ENCODE measurements at regions of chr5 and their contacts with region 1.

Region 1: DNA sequence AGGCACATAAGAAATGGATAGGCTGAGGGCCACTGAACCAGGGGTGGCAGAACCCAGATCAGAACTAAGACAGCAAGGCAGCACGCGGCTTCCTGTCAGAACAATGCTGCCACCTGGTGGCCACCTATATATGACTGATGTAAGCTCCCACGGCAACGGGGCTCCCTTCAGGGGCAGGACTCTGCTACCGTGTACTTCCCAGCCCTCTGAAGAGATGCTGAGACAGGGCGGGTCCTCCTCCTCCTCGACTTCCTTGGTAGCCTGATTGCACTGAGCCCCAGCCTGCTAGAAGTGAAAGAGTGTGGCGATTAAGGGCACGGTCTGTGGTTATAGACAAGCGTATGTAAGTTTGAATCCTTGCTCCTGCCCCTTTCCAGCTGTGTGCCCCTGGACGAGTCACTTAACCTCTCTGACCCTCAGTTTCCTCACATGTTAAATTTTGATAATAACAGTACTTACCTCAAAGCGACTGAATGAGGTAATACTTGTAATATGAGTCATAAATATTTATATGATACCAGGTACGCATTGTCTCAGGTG is 13.3 kb downstream of the RPS14 start:
- DNase-seq: peak; percentile 91
- H3K4me3 ChIP-seq: no peak overlapping the region
- H3K27ac ChIP-seq: no peak overlapping the region
- H3K4me1 ChIP-seq: no peaks in the 10 kb centered on the region
- H3K27me3 ChIP-seq: no peaks in the 10 kb centered on the region
- CTCF ChIP-seq: peak; percentile 86

Region 2: DNA sequence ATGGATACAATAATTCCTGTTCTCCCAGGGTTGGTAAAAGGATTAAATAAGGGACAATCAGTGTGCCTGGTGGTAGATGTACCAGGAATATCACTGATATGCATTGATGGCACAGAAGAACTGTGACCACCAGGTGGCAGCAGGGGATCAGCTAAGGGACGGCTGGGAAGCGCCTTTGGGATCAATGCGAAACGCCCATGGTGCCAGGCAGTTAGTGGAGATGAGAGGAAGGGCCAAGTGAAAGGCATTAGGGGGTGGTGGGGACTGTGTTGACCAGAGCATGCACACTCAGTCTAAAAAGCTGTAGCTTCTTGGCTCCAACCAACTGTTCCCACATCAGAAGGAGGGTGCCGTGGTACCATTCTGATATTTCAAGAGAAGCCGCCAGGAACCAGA is 799.4 kb before region 1 on chr5:
- CTCF ChIA-PET with region 1: no interaction called
- POLR2A ChIA-PET with region 1: no interaction called
- intact Hi-C with region 1: loop called (anchors 5 kb)
- DNase-seq: peak; percentile 89
- H3K4me3 ChIP-seq: no peak overlapping the region
- H3K27ac ChIP-seq: no peak overlapping the region
- H3K4me1 ChIP-seq: no peaks in the 10 kb centered on the region
- H3K27me3 ChIP-seq: no peaks in the 10 kb centered on the region
- CTCF ChIP-seq: peak; percentile 97

Region 3: DNA sequence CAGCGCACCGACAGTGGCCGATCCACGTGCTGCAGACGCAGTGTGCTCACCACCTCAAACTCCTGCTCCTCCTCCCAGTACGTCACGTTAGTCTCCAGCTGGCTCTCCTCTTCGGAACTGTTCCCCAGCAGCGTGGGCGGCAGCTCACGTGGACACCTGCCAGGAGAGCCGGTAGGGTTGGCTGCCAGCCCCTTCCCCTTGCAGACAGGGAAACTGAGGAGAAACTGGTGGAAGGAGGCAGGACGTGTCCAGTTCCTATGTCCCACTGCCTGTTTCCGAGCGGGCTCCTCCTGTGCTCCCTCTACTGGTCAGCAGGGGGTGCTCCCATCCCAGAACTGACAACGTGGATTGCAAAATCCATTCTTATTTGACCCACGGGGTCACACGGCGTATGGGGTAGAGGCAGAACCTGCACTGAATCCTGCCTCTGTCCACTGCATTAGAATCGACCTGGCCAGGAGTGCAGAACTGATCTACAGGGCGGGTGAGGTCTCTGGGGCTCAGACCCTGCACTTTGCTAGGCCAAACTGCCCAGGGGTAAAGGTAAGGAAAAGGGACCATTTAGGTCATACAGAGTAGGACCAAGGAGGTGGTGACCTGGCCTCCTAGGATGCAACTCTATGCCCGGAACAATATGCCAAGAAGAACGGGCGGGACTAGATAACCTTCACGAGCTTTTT is 306.3 kb before region 1 on chr5:
- CTCF ChIA-PET with region 1: no interaction called
- POLR2A ChIA-PET with region 1: no interaction called
- intact Hi-C with region 1: loop called (anchors 2 kb)
- DNase-seq: peak; percentile 67
- H3K4me3 ChIP-seq: no peak overlapping the region
- H3K27ac ChIP-seq: no peak overlapping the region
- H3K4me1 ChIP-seq: no peaks in the 10 kb centered on the region
- H3K27me3 ChIP-seq: no peaks in the 10 kb centered on the region
- CTCF ChIP-seq: peak; percentile 94

Region 4: DNA sequence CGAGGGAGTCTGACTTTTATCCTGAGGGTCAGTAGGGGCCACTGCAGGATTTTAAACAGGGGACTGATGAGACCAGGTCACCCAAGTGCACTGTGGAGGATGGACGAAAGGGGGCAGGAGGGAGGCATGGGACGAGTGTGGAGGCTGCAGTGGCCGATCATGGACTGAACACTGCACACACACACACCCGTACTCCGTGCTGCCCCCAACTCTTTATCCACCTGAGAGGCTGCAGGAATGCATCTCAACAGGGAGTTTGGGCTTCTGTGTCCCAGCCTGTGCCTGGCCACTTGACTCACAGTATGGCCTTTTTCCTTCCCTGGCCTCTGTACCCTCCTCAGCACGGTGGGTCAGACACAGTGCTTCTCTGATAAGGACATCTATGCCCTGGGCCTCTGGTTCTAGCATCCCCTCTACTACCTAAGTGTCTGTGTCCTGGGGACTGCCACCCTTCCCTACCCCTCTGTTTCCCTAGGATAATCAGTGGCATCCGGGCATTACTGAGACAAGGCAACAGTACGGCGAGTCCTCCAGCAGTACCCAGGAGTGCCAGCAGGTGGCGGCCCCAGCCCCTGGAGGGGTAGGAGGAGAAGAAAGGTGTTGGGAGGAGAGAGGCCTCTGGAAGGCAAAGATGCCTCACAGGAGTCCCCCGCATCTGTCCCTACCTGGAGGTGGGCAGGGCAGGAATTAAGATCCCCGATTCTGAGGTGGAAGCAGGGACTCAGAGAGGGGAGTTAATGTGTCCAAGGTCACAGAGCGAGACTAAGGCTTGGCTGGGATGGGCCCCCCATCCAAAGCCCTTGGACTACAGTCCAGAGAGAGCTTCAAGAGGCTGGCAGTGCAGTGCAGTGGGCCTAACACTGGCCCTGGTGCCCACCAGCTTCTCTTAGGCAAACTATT is 274.7 kb before region 1 on chr5:
- CTCF ChIA-PET with region 1: no interaction called
- POLR2A ChIA-PET with region 1: no interaction called
- intact Hi-C with region 1: loop called (anchors 10 kb)
- DNase-seq: peak; percentile 87
- H3K4me3 ChIP-seq: no peak overlapping the region
- H3K27ac ChIP-seq: no peak overlapping the region
- H3K4me1 ChIP-seq: peaks cover 41% of the 10 kb centered on the region
- H3K27me3 ChIP-seq: no peaks in the 10 kb centered on the region
- CTCF ChIP-seq: peak; percentile 96

Region 5: DNA sequence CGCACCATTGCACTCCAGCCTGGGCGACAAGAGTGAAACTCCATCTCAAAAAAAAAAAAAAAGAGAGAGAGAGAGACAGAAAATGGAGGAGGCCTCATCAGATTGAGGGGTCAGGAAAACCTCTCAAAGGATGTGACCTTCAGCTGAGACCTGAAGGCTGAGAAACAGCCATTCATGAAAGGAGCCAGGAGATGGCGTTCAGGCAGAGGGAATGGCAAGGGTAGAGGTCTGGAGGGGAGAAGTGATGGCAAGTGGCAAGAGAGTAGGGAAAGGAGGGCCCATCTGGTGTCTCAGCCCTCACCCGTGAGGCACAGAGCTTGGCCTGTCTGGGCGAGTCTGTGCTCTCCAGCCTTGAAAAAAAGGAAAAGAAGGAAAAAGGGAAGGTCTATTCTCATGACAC is 163.7 kb before region 1 on chr5:
- CTCF ChIA-PET with region 1: interaction called, 4 read pairs
- POLR2A ChIA-PET with region 1: no interaction called
- intact Hi-C with region 1: loop called (anchors 2 kb)
- DNase-seq: peak; percentile 50
- H3K4me3 ChIP-seq: no peak overlapping the region
- H3K27ac ChIP-seq: no peak overlapping the region
- H3K4me1 ChIP-seq: peaks cover 16% of the 10 kb centered on the region
- H3K27me3 ChIP-seq: no peaks in the 10 kb centered on the region
- CTCF ChIP-seq: peak; percentile 50

Region 6: DNA sequence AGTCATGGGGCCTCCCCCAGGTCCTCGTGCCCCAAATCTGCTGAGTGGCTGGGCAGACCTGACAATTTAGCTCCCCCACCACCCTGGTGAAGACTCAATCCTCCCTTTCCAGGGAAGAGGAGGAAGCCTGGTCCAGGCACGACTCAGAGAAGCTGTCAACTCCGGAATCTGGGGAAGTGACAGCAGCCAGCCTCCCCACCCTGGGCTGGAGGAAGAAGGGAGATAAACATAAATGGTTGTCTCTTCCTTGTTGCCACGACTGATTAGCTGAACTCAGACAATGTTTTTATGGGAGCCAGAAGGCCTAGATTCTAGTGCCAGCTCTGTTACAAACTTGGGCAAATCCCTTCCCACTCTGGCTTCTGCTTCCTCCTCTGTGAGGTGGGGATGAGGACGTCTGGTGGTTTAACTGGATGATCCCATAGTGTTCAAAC is 772.3 kb after region 1 on chr5:
- CTCF ChIA-PET with region 1: no interaction called
- POLR2A ChIA-PET with region 1: no interaction called
- intact Hi-C with region 1: no loop called
- DNase-seq: no peak
- H3K4me3 ChIP-seq: no peak overlapping the region
- H3K27ac ChIP-seq: no peak overlapping the region
- H3K4me1 ChIP-seq: no peaks in the 10 kb centered on the region
- H3K27me3 ChIP-seq: no peaks in the 10 kb centered on the region
- CTCF ChIP-seq: no peak